ENCODE measurements at regions of chr2 and their contacts with region 1.

Region 1: DNA sequence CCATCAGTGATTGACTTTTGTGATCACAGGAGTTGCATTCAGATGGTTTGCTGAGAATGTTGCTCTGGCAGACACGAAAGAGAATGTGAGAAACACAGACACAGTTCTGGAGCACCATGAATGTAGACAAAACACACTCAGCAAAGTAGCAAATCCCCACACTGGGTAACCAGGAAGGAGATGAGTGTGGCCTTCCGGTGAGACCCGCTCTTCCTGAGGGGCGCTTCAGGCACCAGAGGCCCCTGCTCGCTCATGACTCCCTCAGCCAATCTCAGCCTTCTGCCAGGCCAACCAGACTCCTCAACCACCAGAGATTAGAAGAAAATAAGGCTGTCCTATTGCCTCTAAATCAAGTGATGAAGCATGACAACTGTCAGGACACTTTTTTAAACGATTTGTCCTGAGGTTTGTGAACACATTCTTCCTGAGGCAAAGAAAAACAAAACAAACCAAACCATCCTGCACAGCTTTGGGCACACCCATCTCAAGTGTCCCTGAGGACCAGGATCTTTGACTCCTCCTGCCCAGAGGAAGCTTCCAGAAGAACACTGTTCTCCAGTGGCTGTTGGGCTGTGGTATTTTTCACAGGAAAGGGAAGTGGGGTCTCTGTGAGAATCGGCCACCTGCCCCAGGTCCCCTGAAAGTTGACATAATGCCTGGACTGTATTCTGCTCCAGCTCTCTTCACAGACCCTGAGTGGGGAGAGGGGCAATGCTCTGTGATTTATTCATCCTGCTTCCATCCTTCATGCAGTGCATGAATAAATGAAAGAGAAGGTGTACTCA is 152.8 kb downstream of the BCL11A start:
- DNase-seq: no peak
- ATAC-seq: peak; percentile 81
- H3K4me3 Mint-ChIP-seq: peak overlapping the region; percentile 56
- H3K27ac Mint-ChIP-seq: peak overlapping the region; percentile 88
- H3K4me1 Mint-ChIP-seq: peaks cover 54% of the 10 kb centered on the region
- H3K27me3 Mint-ChIP-seq: no peaks in the 10 kb centered on the region
- CTCF ChIP-seq: no peak

Region 2: GRCh38 chr2:59900728-59901452 is 499.8 kb before region 1 on chr2:
- CTCF ChIA-PET with region 1: no interaction called
- POLR2A ChIA-PET with region 1: interaction called, 10 read pairs
- intact Hi-C with region 1: no loop called
- DNase-seq: no peak
- ATAC-seq: no peak
- H3K4me3 Mint-ChIP-seq: no peak overlapping the region
- H3K27ac Mint-ChIP-seq: no peak overlapping the region
- H3K4me1 Mint-ChIP-seq: peaks cover 15% of the 10 kb centered on the region
- H3K27me3 Mint-ChIP-seq: peaks cover 5% of the 10 kb centered on the region
- CTCF ChIP-seq: no peak

Region 3: DNA sequence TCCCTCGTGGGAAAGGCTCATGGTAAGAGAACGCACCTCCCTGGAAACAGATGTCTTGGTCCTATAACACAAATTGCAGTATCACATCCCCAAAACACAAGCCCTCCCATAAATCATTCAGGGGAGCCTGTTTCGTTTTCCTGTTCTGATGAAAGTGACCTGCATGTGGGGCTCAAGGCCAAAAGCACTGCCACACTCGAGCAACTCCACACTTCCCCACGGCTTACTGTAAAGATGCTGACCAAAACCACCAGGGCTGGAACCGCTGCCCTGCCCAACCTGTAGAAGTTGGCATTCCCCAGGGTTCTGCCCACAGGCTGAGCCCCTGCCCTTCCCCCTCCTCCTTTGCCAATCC is 13.1 kb after region 1 on chr2:
- CTCF ChIA-PET with region 1: no interaction called
- POLR2A ChIA-PET with region 1: interaction called, 11 read pairs
- intact Hi-C with region 1: loop called (anchors 1 kb)
- DNase-seq: peak; percentile 41
- ATAC-seq: peak; percentile 72
- H3K4me3 Mint-ChIP-seq: peak overlapping the region; percentile 8
- H3K27ac Mint-ChIP-seq: peak overlapping the region; percentile 90
- H3K4me1 Mint-ChIP-seq: peaks cover 87% of the 10 kb centered on the region
- H3K27me3 Mint-ChIP-seq: no peaks in the 10 kb centered on the region
- CTCF ChIP-seq: no peak

Measured in activated B cell treated with CpG ODN at 0.5 μM for 24 hours (primary cell).